Ovary (tissue), 10 donors: ENCODE measurements at regions of chr15 and their contacts with region 1.

Region 1: DNA sequence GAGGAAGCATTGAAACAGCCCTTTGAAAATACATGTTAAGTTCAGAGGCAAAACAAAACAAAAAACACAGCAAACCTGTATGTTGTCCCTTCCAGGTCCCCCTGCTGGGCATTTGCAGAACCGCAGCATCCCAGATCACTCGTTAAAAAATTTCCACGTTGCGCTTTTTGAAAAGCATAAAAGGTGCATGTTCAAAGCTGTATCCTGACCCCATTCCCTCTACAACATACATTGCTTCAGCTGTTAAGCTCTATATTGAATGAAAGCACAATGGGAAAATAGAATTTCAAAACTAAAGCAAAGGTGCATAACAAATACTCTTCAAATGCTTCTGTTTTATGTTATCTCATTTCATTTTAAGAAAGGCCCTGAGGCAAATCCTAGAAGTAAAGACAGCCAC is 328.3 kb downstream of the THSD4 start:
- DNase-seq: peak; percentile 32 to 74 (median 49)
- H3K4me3 ChIP-seq: no peak overlapping the region
- H3K27ac ChIP-seq: no peak overlapping the region
- H3K4me1 ChIP-seq: no peaks in the 10 kb centered on the region
- H3K27me3 ChIP-seq: no peaks in the 10 kb centered on the region
- CTCF ChIP-seq: peak; percentile 49 to 58 (median 54)
- EP300 ChIP-seq: no peak
- POLR2A ChIP-seq: no peak

Region 2: GRCh38 chr15:70892002-70892914 is 551.3 kb before region 1 on chr15 and contains the starts of genes LRRC49 and THAP10:
- intact Hi-C with region 1: loop called in 2 of 4 experiments (anchors 5 kb)
- DNase-seq: peak; percentile 88 to 92 (median 89)
- H3K4me3 ChIP-seq: peak within 1 kb of the TSS; percentile 73
- H3K27ac ChIP-seq: peak within 1 kb of the TSS; percentile 66 to 82
- H3K4me1 ChIP-seq: peaks cover 5% of the 10 kb centered on the region
- H3K27me3 ChIP-seq: no peaks in the 10 kb centered on the region
- CTCF ChIP-seq: no peak
- EP300 ChIP-seq: no peak
- POLR2A ChIP-seq: peak; percentile 40
- total RNA-seq, gene LRRC49: 13.0 to 34.6 (median 16.4) TPM
- total RNA-seq, gene THAP10: 2.6 to 5.0 (median 4.0) TPM

Region 3: GRCh38 chr15:71386448-71387236 is 56.9 kb before region 1 on chr15:
- intact Hi-C with region 1: loop called in 3 of 4 experiments (anchors 2 to 5 kb)
- DNase-seq: no peak
- H3K4me3 ChIP-seq: no peak overlapping the region
- H3K27ac ChIP-seq: no peak overlapping the region
- H3K4me1 ChIP-seq: no peaks in the 10 kb centered on the region
- H3K27me3 ChIP-seq: no peaks in the 10 kb centered on the region
- CTCF ChIP-seq: peak in 2 of 3 donors; percentile 59
- EP300 ChIP-seq: no peak
- POLR2A ChIP-seq: no peak

Region 4: GRCh38 chr15:71997691-71998090 is 554.2 kb after region 1 on chr15:
- intact Hi-C with region 1: no loop called
- DNase-seq: no peak
- H3K4me3 ChIP-seq: no peak overlapping the region
- H3K27ac ChIP-seq: no peak overlapping the region
- H3K4me1 ChIP-seq: no peaks in the 10 kb centered on the region
- H3K27me3 ChIP-seq: no peaks in the 10 kb centered on the region
- CTCF ChIP-seq: no peak
- EP300 ChIP-seq: no peak
- POLR2A ChIP-seq: no peak